ENCODE measurements at regions of chr11 and their contacts with region 1.

Region 1: GRCh38 chr11:75547580-75548058 is 14.4 kb upstream of the SERPINH1 start:
- DNase-seq: peak; percentile 64 to 76
- ATAC-seq: peak; percentile 87 to 94 (median 90)
- H3K4me3 ChIP-seq: no peak overlapping the region
- H3K27ac ChIP-seq: no peak overlapping the region
- H3K4me1 ChIP-seq: no peaks in the 10 kb centered on the region
- H3K27me3 ChIP-seq: no peaks in the 10 kb centered on the region
- CTCF ChIP-seq: peak; percentile 86

Region 2: GRCh38 chr11:75577207-75577606 is 29.6 kb after region 1 on chr11:
- intact Hi-C with region 1: loop called (anchors 1 to 5 kb)
- DNase-seq: peak; percentile 56 to 74
- ATAC-seq: no peak
- H3K4me3 ChIP-seq: no peak overlapping the region
- H3K27ac ChIP-seq: no peak overlapping the region
- H3K4me1 ChIP-seq: peaks cover 8% of the 10 kb centered on the region
- H3K27me3 ChIP-seq: no peaks in the 10 kb centered on the region
- CTCF ChIP-seq: peak; percentile 49

Region 3: DNA sequence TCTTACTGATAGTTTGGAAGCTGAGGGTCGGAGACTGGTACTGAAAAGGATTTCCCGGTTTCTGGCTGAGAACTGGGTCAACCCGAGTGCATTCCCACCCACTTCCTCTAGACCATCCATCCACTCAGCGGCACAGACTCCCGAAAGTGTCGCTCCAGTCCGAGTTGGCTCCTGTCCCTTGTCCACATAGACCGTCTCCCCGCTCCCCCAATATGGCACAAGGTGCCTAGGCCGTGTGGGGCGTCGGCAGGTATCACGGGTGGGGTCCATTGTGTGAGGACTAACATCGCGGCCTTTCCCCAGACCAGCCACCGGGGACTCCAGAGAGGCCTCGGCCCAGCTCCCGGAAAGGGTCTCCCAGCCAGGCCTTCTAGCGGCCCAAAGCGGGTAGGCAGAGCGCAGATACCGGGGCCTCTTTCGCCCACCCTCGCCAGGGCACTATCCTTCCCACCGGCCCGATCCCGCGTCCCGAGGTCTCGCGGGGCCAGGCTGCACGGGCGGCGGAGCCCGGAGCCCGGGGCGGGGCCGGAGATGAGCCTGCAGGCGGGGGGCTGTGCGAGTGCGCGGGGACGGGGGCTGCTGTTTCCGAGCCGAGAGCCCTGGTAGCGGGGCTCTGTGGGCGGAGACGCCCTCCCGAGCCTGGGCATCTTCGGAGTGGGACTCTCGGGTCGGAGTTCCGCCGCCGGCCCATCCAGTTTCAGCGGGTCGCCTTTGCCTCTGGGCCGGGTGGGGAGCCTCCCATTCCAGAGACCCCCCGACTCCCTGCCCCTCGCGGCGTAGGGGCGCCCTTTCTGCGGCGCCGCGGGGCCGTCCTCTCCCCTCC is 35.5 kb after region 1 on chr11:
- intact Hi-C with region 1: loop called in 1 of 2 experiments (anchors 5 kb)
- DNase-seq: peak; percentile 77 to 85
- ATAC-seq: peak; percentile 71 to 95 (median 86)
- H3K4me3 ChIP-seq: peak overlapping the region; percentile 82
- H3K27ac ChIP-seq: peak overlapping the region; percentile 88
- H3K4me1 ChIP-seq: peaks cover 6% of the 10 kb centered on the region
- H3K27me3 ChIP-seq: no peaks in the 10 kb centered on the region
- CTCF ChIP-seq: peak; percentile 43

Region 4: DNA sequence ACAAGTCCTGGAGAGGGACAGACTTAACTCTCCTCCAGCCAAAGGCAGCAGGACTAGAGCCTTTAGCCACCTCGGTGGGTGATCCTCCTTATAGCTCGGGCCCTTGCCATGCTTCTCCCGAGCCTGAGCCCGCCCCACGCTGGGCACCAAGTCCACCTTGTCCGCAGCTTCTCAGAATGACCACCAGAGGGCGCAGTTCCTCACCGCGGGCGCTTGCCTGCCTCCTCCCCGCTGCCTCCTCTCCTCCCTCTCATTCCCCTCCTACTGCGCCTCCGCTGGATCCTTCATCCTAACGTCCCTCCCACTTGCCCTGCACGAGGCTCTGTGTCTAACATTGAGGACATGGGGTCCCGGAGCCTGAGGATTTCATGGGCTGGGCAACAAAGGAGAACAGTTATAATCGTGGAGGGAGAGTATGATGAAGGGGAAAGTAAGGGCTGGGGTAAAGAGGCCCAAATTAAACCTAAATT is 158.7 kb after region 1 on chr11:
- intact Hi-C with region 1: loop called in 1 of 2 experiments (anchors 2 kb)
- DNase-seq: peak; percentile 67 to 80
- ATAC-seq: peak; percentile 78 to 97 (median 94)
- H3K4me3 ChIP-seq: no peak overlapping the region
- H3K27ac ChIP-seq: no peak overlapping the region
- H3K4me1 ChIP-seq: no peaks in the 10 kb centered on the region
- H3K27me3 ChIP-seq: no peaks in the 10 kb centered on the region
- CTCF ChIP-seq: peak; percentile 91

Region 5: GRCh38 chr11:75768112-75768908 is 220.7 kb after region 1 on chr11 and contains the start of gene DGAT2:
- intact Hi-C with region 1: loop called in 1 of 2 experiments (anchors 5 kb)
- DNase-seq: peak; percentile 80 to 88
- ATAC-seq: peak; percentile 85 to 97 (median 88)
- H3K4me3 ChIP-seq: peak within 1 kb of the TSS; percentile 68
- H3K27ac ChIP-seq: no peak within 1 kb of the TSS
- H3K4me1 ChIP-seq: peaks cover 6% of the 10 kb centered on the region
- H3K27me3 ChIP-seq: peaks cover 0 to 26% (median 0%) of the 10 kb centered on the region in 3 donors
- CTCF ChIP-seq: no peak
- total RNA-seq, gene DGAT2: 1.1 to 6.7 (median 3.4) TPM

Region 6: GRCh38 chr11:75867775-75868374 is 320.3 kb after region 1 on chr11:
- intact Hi-C with region 1: loop called in 1 of 2 experiments (anchors 5 kb)
- DNase-seq: no peak
- ATAC-seq: peak; percentile 61 to 88 (median 68)
- H3K4me3 ChIP-seq: no peak overlapping the region
- H3K27ac ChIP-seq: no peak overlapping the region
- H3K4me1 ChIP-seq: peaks cover 4% of the 10 kb centered on the region
- H3K27me3 ChIP-seq: no peaks in the 10 kb centered on the region
- CTCF ChIP-seq: peak; percentile 90

Measured in psoas muscle (tissue), 8 donors.